CD4-positive, alpha-beta T cell (primary cell): ENCODE measurements at regions of chr5 and their contacts with region 1.

Region 1: DNA sequence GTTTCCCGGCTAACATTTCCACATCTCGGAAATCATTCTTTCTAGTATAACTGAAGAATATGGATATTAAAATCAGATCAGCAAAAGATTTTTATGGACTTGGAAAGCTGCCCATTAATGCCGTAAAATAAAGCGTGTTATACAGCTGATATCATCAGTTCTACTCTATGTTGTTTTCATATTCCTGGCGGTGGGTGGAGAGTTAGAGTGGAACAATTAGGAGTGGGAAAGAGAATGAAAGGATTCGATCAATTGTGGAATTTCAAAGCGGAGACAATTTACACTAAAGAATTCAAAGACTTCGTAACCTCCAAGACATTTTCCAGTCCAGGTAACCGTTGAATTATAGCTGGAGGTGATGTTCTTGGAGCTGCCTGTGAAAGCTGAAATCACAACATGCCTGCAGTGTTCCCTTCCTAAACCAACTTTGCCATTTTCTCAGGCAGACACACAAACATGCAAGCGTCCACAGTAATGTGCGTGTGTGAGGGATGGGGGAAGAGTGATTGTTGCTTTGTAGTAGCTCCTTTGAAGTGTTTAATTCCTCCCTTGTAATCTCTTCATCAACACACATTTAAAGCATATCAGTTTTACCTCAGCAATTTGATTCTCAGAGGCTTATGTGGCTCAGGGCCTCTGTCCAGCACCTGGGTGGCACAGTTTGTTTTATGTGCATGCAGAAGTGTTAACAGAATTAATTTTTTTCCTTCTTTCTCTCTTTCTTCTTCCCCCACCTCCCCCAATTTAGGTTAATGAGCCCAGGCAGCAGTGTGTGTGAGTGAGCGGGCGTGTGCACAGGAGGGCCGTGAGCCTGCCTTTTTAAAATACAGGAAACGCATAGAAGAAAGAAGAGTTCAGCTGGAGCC is 544.1 kb downstream of the RAB3C start:
- DNase-seq: peak in 3 of 14 experiments; percentile 5 to 81 (median 75)
- ATAC-seq: peak; percentile 5
- H3K4me3 ChIP-seq: peak overlapping the region; percentile 51
- H3K4me3 Mint-ChIP-seq: no peak overlapping the region
- H3K27ac ChIP-seq: peak overlapping the region; percentile 56 to 68
- H3K27ac Mint-ChIP-seq: no peak overlapping the region
- H3K4me1 ChIP-seq: peaks cover 36% of the 10 kb centered on the region
- H3K4me1 Mint-ChIP-seq: peaks cover 13% of the 10 kb centered on the region
- H3K27me3 ChIP-seq: no peaks in the 10 kb centered on the region
- H3K27me3 Mint-ChIP-seq: no peaks in the 10 kb centered on the region
- CTCF ChIP-seq: no peak

Region 2: GRCh38 chr5:58886315-58887207 is 240.4 kb before region 1 on chr5:
- CTCF ChIA-PET with region 1: interaction called, 6 read pairs
- POLR2A ChIA-PET with region 1: no interaction called
- intact Hi-C with region 1: loop called in 1 of 2 experiments (anchors 5 kb)
- DNase-seq: peak; percentile 36 to 83 (median 52)
- ATAC-seq: peak; percentile 81
- H3K4me3 ChIP-seq: no peak overlapping the region
- H3K4me3 Mint-ChIP-seq: no peak overlapping the region
- H3K27ac ChIP-seq: no peak overlapping the region
- H3K27ac Mint-ChIP-seq: no peak overlapping the region
- H3K4me1 ChIP-seq: peaks cover 20% of the 10 kb centered on the region
- H3K4me1 Mint-ChIP-seq: peaks cover 32% of the 10 kb centered on the region
- H3K27me3 ChIP-seq: peaks cover 0 to 4% of the 10 kb centered on the region in 2 experiments
- H3K27me3 Mint-ChIP-seq: peaks cover 5% of the 10 kb centered on the region
- CTCF ChIP-seq: peak; percentile 92

Region 3: GRCh38 chr5:58972301-58972700 is 154.6 kb before region 1 on chr5:
- CTCF ChIA-PET with region 1: no interaction called
- POLR2A ChIA-PET with region 1: no interaction called
- intact Hi-C with region 1: loop called in 1 of 2 experiments (anchors 5 kb)
- DNase-seq: no peak
- ATAC-seq: peak; percentile 19
- H3K4me3 ChIP-seq: no peak overlapping the region
- H3K4me3 Mint-ChIP-seq: no peak overlapping the region
- H3K27ac ChIP-seq: no peak overlapping the region
- H3K27ac Mint-ChIP-seq: no peak overlapping the region
- H3K4me1 ChIP-seq: no peaks in the 10 kb centered on the region
- H3K4me1 Mint-ChIP-seq: no peaks in the 10 kb centered on the region
- H3K27me3 ChIP-seq: no peaks in the 10 kb centered on the region
- H3K27me3 Mint-ChIP-seq: no peaks in the 10 kb centered on the region
- CTCF ChIP-seq: no peak

Region 4: GRCh38 chr5:59086024-59086423 is 40.9 kb before region 1 on chr5:
- CTCF ChIA-PET with region 1: interaction called, 3 read pairs
- POLR2A ChIA-PET with region 1: interaction called, 4 read pairs
- intact Hi-C with region 1: loop called (anchors 5 kb)
- DNase-seq: peak in 2 of 14 experiments; percentile 17 to 19
- ATAC-seq: peak; percentile 41
- H3K4me3 ChIP-seq: no peak overlapping the region
- H3K4me3 Mint-ChIP-seq: no peak overlapping the region
- H3K27ac ChIP-seq: no peak overlapping the region
- H3K27ac Mint-ChIP-seq: no peak overlapping the region
- H3K4me1 ChIP-seq: no peaks in the 10 kb centered on the region
- H3K4me1 Mint-ChIP-seq: no peaks in the 10 kb centered on the region
- H3K27me3 ChIP-seq: no peaks in the 10 kb centered on the region
- H3K27me3 Mint-ChIP-seq: peaks cover 3% of the 10 kb centered on the region
- CTCF ChIP-seq: no peak

Region 5: DNA sequence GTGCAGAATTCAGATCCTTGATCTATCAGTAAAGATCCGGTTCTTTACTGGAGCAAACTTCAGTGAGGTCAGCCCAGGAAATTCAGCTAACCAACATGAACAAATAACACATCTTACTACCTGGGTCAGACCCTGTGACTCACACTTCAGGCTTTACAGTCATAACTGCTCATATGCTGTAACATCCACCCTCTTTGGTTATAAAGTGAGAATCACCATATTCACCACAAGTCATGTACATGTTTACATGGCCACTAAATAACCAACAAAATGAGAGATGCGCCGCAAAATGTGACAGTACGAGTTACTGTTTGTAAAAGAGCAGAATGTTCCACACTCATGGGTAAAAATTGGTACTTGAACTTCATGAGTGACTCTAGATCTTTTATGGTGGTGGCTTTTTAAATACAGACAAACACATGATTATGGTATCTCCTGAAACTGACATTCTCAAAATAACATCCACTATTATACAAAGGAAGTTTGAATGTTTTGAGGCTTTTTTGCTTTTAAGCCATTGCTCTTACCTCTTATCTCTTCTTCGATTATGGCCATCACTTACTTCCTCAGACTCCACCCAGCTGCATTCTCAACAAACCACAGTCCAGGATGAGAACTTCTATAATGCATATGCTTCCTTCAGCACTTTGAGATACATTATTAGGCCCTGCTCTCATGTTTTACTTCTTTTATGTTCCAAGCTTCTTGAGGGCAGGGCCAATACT is 27.5 kb before region 1 on chr5:
- CTCF ChIA-PET with region 1: interaction called, 3 read pairs
- POLR2A ChIA-PET with region 1: interaction called, 10 read pairs
- intact Hi-C with region 1: loop called in 1 of 2 experiments (anchors 1 kb)
- DNase-seq: peak in 10 of 14 experiments; percentile 2 to 86 (median 20)
- ATAC-seq: peak; percentile 90
- H3K4me3 ChIP-seq: no peak overlapping the region
- H3K4me3 Mint-ChIP-seq: no peak overlapping the region
- H3K27ac ChIP-seq: peak overlapping the region in 1 of 2 donors; percentile 51
- H3K27ac Mint-ChIP-seq: peak overlapping the region; percentile 37
- H3K4me1 ChIP-seq: peaks cover 13% of the 10 kb centered on the region
- H3K4me1 Mint-ChIP-seq: peaks cover 35% of the 10 kb centered on the region
- H3K27me3 ChIP-seq: no peaks in the 10 kb centered on the region
- H3K27me3 Mint-ChIP-seq: no peaks in the 10 kb centered on the region
- CTCF ChIP-seq: no peak

Region 6: GRCh38 chr5:59317023-59317773 is 190.3 kb after region 1 on chr5:
- CTCF ChIA-PET with region 1: no interaction called
- POLR2A ChIA-PET with region 1: no interaction called
- intact Hi-C with region 1: no loop called
- DNase-seq: no peak
- ATAC-seq: no peak
- H3K4me3 ChIP-seq: no peak overlapping the region
- H3K4me3 Mint-ChIP-seq: no peak overlapping the region
- H3K27ac ChIP-seq: no peak overlapping the region
- H3K27ac Mint-ChIP-seq: no peak overlapping the region
- H3K4me1 ChIP-seq: no peaks in the 10 kb centered on the region
- H3K4me1 Mint-ChIP-seq: no peaks in the 10 kb centered on the region
- H3K27me3 ChIP-seq: peaks cover 0 to 3% of the 10 kb centered on the region in 2 experiments
- H3K27me3 Mint-ChIP-seq: peaks cover 1% of the 10 kb centered on the region
- CTCF ChIP-seq: no peak